ENCODE measurements at regions of chr14 and their contacts with region 1.

Region 1: DNA sequence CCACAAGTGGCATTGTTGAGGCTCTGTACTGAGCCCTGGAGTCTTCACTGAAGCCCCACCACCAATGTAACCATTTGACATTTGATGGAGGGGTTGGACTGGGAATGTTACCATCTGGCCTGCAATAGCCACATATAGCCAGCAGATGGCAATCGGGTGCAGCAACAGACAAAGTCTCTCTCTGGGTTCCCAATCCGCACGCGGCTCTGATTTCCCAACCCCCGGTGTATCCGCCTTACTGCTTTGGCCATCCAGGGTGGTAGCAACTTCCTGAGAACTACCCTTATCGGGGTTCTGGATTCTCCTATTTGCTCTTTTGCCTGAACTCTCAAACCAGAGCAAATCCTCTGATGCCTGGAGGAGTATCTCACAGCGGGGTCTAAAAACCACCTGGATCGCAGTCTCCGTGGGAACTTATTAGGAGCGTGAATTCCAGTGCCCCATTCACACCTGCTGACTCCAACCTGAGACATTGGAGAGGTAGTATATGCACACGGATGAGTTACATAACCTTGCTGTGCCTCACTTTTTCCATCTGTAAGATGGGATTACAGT is 14.2 kb downstream of the VRTN start:
- DNase-seq: peak; percentile 60 to 86 (median 82)
- ATAC-seq: peak; percentile 99
- H3K4me3 ChIP-seq: no peak overlapping the region
- H3K27ac ChIP-seq: no peak overlapping the region
- H3K4me1 ChIP-seq: peaks cover 3 to 7% of the 10 kb centered on the region in 2 donors
- H3K27me3 ChIP-seq: no peaks in the 10 kb centered on the region
- CTCF ChIP-seq: peak; percentile 90 to 91

Region 2: GRCh38 chr14:74475678-74476077 is 113.2 kb after region 1 on chr14:
- intact Hi-C with region 1: no loop called
- DNase-seq: no peak
- ATAC-seq: no peak
- H3K4me3 ChIP-seq: no peak overlapping the region
- H3K27ac ChIP-seq: no peak overlapping the region
- H3K4me1 ChIP-seq: no peaks in the 10 kb centered on the region
- H3K27me3 ChIP-seq: no peaks in the 10 kb centered on the region
- CTCF ChIP-seq: no peak

Region 3: GRCh38 chr14:74493343-74494261 is 131.2 kb after region 1 on chr14 and contains the start of gene ISCA2:
- intact Hi-C with region 1: loop called in 1 of 2 experiments (anchors 5 kb)
- DNase-seq: peak; percentile 97 to 100 (median 100)
- ATAC-seq: peak; percentile 89
- H3K4me3 ChIP-seq: peak within 1 kb of the TSS; percentile 83 to 97
- H3K27ac ChIP-seq: peak within 1 kb of the TSS; percentile 95 to 97
- H3K4me1 ChIP-seq: peaks cover 14 to 59% of the 10 kb centered on the region in 2 donors
- H3K27me3 ChIP-seq: no peaks in the 10 kb centered on the region
- CTCF ChIP-seq: peak in 1 of 2 donors; percentile 6
- polyA plus RNA-seq, gene ISCA2: 29.4 to 35.2 (median 32.2) TPM